CD8-positive, alpha-beta T cell (primary cell): ENCODE measurements at regions of chr2 and their contacts with region 1.

Region 1: DNA sequence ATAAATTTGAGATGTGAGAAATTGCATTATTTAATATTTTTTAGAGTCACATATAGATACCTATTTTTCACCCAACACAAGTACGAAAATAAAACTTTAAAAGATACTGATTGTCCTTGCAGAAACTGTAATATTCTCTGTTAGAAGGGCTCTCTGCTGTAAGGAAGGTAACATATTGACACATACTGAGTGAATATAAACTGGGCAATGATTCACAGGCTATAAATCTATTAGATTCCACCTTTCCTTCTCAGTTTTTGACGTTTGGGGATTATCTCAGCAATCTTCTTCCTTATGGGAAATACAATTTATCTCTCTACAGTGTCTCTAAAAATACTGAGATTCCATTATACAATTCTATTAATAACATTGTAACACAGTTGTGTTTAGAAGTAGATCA is 229.1 kb upstream of the MAP2 start:
- DNase-seq: no peak
- ATAC-seq: no peak
- H3K4me3 ChIP-seq: no peak overlapping the region
- H3K4me3 Mint-ChIP-seq: no peak overlapping the region
- H3K27ac ChIP-seq: no peak overlapping the region
- H3K27ac Mint-ChIP-seq: no peak overlapping the region
- H3K4me1 ChIP-seq: no peaks in the 10 kb centered on the region
- H3K4me1 Mint-ChIP-seq: no peaks in the 10 kb centered on the region
- H3K27me3 ChIP-seq: no peaks in the 10 kb centered on the region
- H3K27me3 Mint-ChIP-seq: no peaks in the 10 kb centered on the region
- CTCF ChIP-seq: no peak

Region 2: DNA sequence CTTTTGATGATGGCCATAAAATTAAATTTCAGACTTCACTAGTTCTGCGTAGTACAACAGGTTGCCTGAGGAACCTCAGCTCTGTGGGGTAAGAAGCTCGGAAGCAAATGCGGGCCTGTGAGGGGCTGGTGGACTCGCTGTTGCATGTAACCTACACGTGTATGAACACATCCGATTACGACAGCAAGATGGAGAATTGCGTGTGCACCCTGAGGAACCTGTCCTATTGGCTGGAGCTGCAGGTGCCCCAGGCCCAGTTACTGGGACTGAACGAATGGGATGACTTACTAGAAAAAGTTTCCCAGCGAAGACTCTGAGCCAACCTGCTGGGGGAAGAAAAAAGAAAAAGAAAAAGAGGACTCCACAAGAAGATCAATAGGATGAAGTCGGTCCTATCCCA is 15.1 kb before region 1 on chr2:
- CTCF ChIA-PET with region 1: no interaction called
- POLR2A ChIA-PET with region 1: no interaction called
- intact Hi-C with region 1: no loop called
- DNase-seq: no peak
- ATAC-seq: no peak
- H3K4me3 ChIP-seq: no peak overlapping the region
- H3K4me3 Mint-ChIP-seq: no peak overlapping the region
- H3K27ac ChIP-seq: no peak overlapping the region
- H3K27ac Mint-ChIP-seq: no peak overlapping the region
- H3K4me1 ChIP-seq: no peaks in the 10 kb centered on the region
- H3K4me1 Mint-ChIP-seq: no peaks in the 10 kb centered on the region
- H3K27me3 ChIP-seq: no peaks in the 10 kb centered on the region
- H3K27me3 Mint-ChIP-seq: no peaks in the 10 kb centered on the region
- CTCF ChIP-seq: no peak

Region 3: DNA sequence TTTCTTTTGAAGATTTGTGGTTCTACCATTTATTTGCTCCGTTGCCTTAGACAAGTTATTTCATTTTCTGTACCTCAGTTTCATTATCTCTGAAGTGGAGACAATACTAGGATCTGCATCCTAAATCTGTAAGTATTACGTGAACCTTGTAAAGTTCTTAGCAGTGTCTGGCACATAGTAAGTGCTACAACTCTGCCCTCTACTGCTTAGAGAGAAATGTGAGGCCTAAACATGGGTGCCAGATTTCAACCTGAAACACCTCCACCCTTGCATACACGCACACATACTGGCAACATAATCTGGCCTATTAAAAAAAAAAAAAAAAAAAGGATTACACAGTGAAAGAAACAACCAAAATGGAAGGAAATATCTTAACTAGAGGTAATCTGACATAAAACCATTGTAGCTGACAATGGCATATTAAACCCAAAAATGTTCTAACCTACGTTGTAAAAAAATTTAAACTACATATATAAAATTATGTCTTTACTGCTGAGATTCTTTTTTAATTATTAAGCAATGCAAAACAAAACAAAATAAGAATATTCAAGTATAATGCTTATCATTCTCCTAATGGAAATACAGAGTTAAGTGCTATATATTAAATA is 361.7 kb after region 1 on chr2:
- CTCF ChIA-PET with region 1: no interaction called
- POLR2A ChIA-PET with region 1: no interaction called
- intact Hi-C with region 1: no loop called
- DNase-seq: no peak
- ATAC-seq: no peak
- H3K4me3 ChIP-seq: no peak overlapping the region
- H3K4me3 Mint-ChIP-seq: no peak overlapping the region
- H3K27ac ChIP-seq: no peak overlapping the region
- H3K27ac Mint-ChIP-seq: no peak overlapping the region
- H3K4me1 ChIP-seq: no peaks in the 10 kb centered on the region
- H3K4me1 Mint-ChIP-seq: no peaks in the 10 kb centered on the region
- H3K27me3 ChIP-seq: no peaks in the 10 kb centered on the region
- H3K27me3 Mint-ChIP-seq: no peaks in the 10 kb centered on the region
- CTCF ChIP-seq: no peak

Region 4: DNA sequence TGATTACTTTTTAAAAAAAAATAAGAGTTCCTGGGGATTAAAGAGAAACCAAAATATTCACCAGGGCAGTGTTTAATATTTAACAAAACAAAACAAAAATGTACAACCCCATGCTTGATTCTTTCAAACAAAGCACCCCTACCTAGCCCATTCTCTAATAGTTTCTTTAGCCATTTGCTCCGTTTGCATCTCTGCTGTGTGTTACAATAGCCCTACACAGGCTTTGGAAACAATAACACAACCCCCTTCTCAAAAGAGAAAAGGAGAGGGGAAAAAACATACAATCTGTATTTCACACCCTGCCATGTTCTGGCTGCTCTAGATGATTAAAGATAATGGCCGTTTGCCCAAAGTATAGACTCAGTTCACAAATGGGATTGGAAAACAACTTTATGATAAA is 1664.6 kb after region 1 on chr2:
- CTCF ChIA-PET with region 1: no interaction called
- POLR2A ChIA-PET with region 1: no interaction called
- intact Hi-C with region 1: loop called in 1 of 2 experiments (anchors 5 kb)
- DNase-seq: no peak
- ATAC-seq: no peak
- H3K4me3 ChIP-seq: no peak overlapping the region
- H3K4me3 Mint-ChIP-seq: no peak overlapping the region
- H3K27ac ChIP-seq: no peak overlapping the region
- H3K27ac Mint-ChIP-seq: no peak overlapping the region
- H3K4me1 ChIP-seq: no peaks in the 10 kb centered on the region
- H3K4me1 Mint-ChIP-seq: no peaks in the 10 kb centered on the region
- H3K27me3 ChIP-seq: no peaks in the 10 kb centered on the region
- H3K27me3 Mint-ChIP-seq: no peaks in the 10 kb centered on the region
- CTCF ChIP-seq: no peak